Uterus (tissue), 4 donors: ENCODE measurements at regions of chr13 and their contacts with region 1.

Region 1: GRCh38 chr13:27362064-27362883 is 62.1 kb upstream of the GTF3A start:
- DNase-seq: peak; percentile 76 to 84
- H3K4me3 ChIP-seq: peak overlapping the region; percentile 22 to 32
- H3K27ac ChIP-seq: no peak overlapping the region
- H3K4me1 ChIP-seq: no peaks in the 10 kb centered on the region
- H3K27me3 ChIP-seq: no peaks in the 10 kb centered on the region
- CTCF ChIP-seq: peak; percentile 89 to 95 (median 92)
- POLR2A ChIP-seq: no peak

Region 2: DNA sequence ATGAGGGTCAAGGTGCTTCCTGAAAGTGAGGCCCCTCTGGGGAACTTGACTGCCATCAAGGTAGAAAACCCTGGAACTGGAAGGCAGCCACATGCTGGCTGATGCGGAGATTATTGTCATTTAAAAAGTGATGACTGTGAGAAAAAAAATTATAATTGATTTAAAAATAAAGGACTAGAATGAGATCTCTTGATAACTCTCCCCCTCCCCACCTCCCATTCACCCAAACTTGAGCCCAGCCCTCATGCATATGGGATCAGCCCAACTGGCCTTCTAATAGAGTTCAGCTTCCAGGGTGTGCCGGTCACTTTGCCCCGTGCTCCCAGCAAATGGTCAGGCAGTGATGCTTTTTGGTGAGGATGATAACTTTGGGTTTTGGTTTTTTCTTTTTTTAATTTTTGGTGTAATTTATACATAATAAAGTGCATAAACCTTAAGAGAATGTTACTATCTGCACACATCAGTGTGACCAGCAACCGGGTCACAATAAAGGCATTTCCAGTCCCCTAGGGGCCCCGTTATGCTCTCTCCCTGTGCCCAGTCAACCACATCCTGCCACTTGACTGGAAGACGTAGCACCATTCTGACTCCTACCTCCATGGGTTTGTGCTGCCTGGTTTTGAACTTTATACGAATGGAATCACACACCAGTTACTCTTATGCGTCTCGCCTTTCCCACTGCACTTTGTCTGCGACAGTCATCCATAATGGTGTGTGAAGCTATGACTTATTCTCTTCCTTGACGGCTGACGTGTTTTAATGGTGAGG is 378.5 kb before region 1 on chr13:
- intact Hi-C with region 1: loop called (anchors 5 kb)
- DNase-seq: no peak
- H3K4me3 ChIP-seq: no peak overlapping the region
- H3K27ac ChIP-seq: peak overlapping the region; percentile 15 to 59
- H3K4me1 ChIP-seq: peaks cover 4 to 11% of the 10 kb centered on the region in 2 donors
- H3K27me3 ChIP-seq: no peaks in the 10 kb centered on the region
- CTCF ChIP-seq: no peak
- POLR2A ChIP-seq: no peak

Region 3: GRCh38 chr13:27053902-27054595 is 308.2 kb before region 1 on chr13:
- intact Hi-C with region 1: no loop called
- DNase-seq: no peak
- H3K4me3 ChIP-seq: no peak overlapping the region
- H3K27ac ChIP-seq: no peak overlapping the region
- H3K4me1 ChIP-seq: no peaks in the 10 kb centered on the region
- H3K27me3 ChIP-seq: no peaks in the 10 kb centered on the region
- CTCF ChIP-seq: no peak
- POLR2A ChIP-seq: no peak

Region 4: GRCh38 chr13:27826379-27827353 is 464.4 kb after region 1 on chr13:
- intact Hi-C with region 1: loop called (anchors 5 kb)
- DNase-seq: peak; percentile 62 to 67
- H3K4me3 ChIP-seq: no peak overlapping the region
- H3K27ac ChIP-seq: no peak overlapping the region
- H3K4me1 ChIP-seq: no peaks in the 10 kb centered on the region
- H3K27me3 ChIP-seq: peaks cover 0 to 35% of the 10 kb centered on the region in 2 donors
- CTCF ChIP-seq: peak; percentile 75 to 93 (median 86)
- POLR2A ChIP-seq: no peak

Region 5: DNA sequence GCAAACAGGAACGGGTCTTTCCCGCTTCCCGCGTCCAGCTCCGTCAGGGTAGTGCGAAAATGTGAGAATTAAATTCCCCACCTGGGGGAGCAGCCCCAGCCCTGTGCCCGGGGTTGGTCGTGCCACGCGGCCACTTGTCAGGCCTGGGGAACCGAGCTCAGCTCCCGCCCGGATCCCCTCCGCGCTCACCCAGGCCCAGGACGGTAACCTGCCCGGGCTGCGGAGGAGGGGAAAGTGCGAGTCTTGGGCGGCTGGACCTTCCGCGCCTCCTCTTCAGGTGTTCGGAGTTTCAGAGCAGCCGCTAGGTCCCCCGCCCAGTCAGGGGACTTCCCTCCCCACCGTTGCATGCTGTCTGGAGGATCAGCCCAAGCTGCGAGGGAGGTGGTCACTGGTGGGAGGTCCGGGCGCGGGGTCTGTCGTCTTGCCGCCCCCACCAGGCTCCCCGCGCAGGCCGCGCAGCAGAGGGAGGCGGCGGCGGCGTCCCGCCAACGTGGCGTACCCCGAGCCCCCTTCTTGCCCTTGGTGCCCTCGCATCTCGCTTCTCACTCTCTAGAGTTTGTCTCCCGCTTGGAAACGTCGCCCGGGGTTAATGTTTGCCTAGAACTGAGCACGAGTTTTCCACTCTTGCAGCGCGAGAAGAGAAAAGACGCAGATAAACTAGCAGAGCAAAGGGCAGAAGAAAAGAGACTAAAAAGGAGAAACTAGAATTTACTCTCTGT is 618.2 kb after region 1 on chr13:
- intact Hi-C with region 1: loop called (anchors 10 kb)
- DNase-seq: no peak
- H3K4me3 ChIP-seq: no peak overlapping the region
- H3K27ac ChIP-seq: no peak overlapping the region
- H3K4me1 ChIP-seq: peaks cover 0 to 16% of the 10 kb centered on the region in 2 donors
- H3K27me3 ChIP-seq: peaks cover 0 to 40% of the 10 kb centered on the region in 2 donors
- CTCF ChIP-seq: no peak
- POLR2A ChIP-seq: no peak